ENCODE measurements at regions of chr3 and their contacts with region 1.

Region 1: DNA sequence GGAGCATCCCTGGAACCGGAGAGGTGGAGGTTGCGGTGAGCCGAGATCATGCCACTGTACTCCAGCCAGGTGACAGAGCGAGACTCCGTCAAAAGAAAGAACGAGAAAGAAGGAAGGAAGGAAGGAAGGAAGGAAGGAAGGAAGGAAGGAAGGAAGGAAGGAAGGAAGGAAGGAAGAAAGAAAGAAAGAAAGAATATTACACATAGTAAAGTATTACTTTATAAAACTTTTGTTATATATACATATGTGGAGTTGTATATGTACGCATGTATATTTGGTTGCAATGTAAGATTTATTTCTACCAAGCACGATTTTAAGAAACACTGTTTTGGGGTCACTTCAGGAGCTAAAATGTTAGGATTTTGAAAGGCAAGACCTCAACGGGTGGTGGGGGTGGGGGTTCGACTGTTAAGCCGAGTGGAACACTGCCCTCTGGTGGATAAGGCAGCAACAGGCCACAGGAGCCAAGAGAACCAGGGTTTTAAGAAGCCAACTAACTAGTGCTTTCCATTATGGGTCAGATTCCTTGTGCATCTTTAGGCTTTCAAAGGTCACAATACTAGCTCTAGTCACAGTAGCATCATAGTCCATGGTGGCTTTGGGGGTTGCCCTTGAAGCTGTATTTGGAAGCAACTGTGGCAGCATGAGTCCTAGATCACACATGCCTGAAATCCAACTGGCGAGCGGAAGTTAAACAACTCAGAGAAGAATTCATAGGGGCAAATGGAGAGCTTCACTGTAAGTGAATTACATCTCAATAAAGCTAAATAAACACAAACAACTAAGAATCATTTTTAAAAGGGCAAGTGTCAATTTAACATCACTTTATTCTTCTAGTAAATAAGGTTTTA is 22.5 kb downstream of the GLB1 start:
- DNase-seq: peak; percentile 85
- ATAC-seq: peak; percentile 87
- H3K4me3 Mint-ChIP-seq: no peak overlapping the region
- H3K27ac Mint-ChIP-seq: no peak overlapping the region
- H3K4me1 Mint-ChIP-seq: peaks cover 11% of the 10 kb centered on the region
- H3K27me3 Mint-ChIP-seq: no peaks in the 10 kb centered on the region
- CTCF ChIP-seq: peak; percentile 78

Region 2: DNA sequence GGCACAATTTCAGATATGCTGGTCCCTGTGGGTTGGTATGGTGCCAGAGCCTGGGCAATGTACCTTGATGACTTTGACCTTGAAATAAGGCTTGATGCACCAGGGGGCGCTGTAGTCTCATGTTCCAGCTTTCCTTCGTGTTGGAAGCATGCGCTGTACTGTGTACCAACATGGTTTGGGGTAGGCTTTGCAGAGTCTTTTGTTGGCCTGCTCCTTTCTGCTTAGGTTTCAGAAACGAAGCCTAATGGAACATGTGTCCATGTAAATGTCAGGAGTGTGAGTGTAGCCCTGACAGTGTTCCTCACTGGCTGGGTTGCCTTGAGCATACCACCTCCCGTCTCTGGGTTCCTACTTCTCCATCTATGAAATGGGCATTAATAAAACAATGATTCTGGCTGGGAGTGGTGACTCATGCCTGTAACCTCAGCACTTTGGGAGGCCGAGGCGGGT is 126.6 kb before region 1 on chr3:
- CTCF ChIA-PET with region 1: interaction called, 183 read pairs
- POLR2A ChIA-PET with region 1: interaction called, 3 read pairs
- intact Hi-C with region 1: loop called (anchors 2 kb)
- DNase-seq: peak; percentile 99
- ATAC-seq: peak; percentile 74
- H3K4me3 Mint-ChIP-seq: no peak overlapping the region
- H3K27ac Mint-ChIP-seq: peak overlapping the region; percentile 25
- H3K4me1 Mint-ChIP-seq: peaks cover 42% of the 10 kb centered on the region
- H3K27me3 Mint-ChIP-seq: no peaks in the 10 kb centered on the region
- CTCF ChIP-seq: peak; percentile 80

Region 3: DNA sequence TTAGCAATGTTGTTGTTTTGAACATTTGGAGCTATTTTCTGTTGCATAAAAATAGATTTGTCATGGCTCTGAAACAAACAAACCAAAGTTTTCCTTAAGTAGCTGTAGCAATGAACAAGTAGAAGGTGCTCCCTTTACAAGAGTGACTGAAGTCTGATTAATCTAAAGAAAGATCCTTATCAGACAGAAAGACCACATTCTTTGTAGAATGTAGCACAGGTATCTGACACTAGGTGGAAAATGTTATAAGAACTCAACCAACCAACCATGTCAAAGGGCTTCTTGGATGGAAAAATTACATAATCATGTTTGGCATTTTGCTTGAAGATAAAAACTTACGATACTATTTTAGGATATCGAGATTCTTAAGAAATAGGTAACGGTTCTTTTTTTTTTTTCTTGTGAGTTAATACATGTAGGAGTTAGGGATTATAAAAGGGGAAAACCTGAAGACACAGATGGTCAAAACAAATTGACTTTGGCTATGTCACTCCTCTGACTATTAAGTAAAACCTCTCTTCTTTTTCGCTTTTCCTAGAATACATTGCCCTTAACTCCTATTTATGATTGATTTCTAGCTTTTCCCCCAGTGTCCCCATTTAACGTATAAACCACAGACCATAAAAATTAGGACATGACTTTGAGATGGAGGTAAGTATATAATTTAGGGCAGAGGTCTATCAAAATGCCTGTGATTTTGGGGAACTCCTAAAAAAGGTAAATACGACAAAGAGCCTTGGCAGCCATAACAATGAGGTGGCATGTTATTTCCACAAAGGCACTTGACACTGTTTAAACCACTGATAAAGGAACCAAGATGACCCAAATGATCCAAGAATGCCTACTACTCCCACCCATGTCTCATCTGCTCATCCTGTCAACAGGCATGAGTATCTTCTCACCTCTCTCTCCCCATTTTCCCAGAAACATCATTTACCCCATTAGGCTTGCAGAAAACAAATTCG is 51.0 kb before region 1 on chr3:
- CTCF ChIA-PET with region 1: interaction called, 14 read pairs
- POLR2A ChIA-PET with region 1: no interaction called
- intact Hi-C with region 1: no loop called
- DNase-seq: peak; percentile 33
- ATAC-seq: peak; percentile 86
- H3K4me3 Mint-ChIP-seq: peak overlapping the region; percentile 38
- H3K27ac Mint-ChIP-seq: peak overlapping the region; percentile 95
- H3K4me1 Mint-ChIP-seq: peaks cover 49% of the 10 kb centered on the region
- H3K27me3 Mint-ChIP-seq: no peaks in the 10 kb centered on the region
- CTCF ChIP-seq: peak; percentile 32

Region 4: DNA sequence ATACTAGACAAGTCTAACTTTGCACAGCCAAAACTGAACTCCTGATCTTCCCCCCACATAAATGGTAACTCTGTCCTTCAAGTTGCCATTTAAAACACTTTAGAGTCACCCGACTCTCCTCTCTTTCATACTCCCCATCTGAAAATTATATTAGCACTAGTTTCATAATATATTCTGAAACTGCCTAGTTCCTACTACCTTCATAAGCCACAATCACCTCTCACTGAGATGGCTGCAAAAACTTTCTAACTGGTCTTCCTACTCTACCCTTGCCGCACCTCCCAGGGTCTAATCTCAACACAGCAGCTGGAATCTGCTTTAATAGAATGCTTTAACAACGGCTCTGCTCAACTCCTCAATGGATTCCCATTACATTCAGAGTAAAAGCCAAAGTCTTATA is 32.5 kb before region 1 on chr3:
- CTCF ChIA-PET with region 1: interaction called, 11 read pairs
- POLR2A ChIA-PET with region 1: no interaction called
- intact Hi-C with region 1: no loop called
- DNase-seq: no peak
- ATAC-seq: no peak
- H3K4me3 Mint-ChIP-seq: no peak overlapping the region
- H3K27ac Mint-ChIP-seq: no peak overlapping the region
- H3K4me1 Mint-ChIP-seq: peaks cover 37% of the 10 kb centered on the region
- H3K27me3 Mint-ChIP-seq: no peaks in the 10 kb centered on the region
- CTCF ChIP-seq: no peak

Region 5: GRCh38 chr3:33063651-33064051 is 10.8 kb before region 1 on chr3:
- CTCF ChIA-PET with region 1: interaction called, 54 read pairs
- POLR2A ChIA-PET with region 1: interaction called, 3 read pairs
- intact Hi-C with region 1: no loop called
- DNase-seq: peak; percentile 92
- ATAC-seq: peak; percentile 78
- H3K4me3 Mint-ChIP-seq: peak overlapping the region; percentile 24
- H3K27ac Mint-ChIP-seq: peak overlapping the region; percentile 93
- H3K4me1 Mint-ChIP-seq: peaks cover 63% of the 10 kb centered on the region
- H3K27me3 Mint-ChIP-seq: no peaks in the 10 kb centered on the region
- CTCF ChIP-seq: no peak

Region 6: GRCh38 chr3:33096093-33096868 is 21.8 kb after region 1 on chr3:
- CTCF ChIA-PET with region 1: interaction called, 24 read pairs
- POLR2A ChIA-PET with region 1: interaction called, 4 read pairs
- intact Hi-C with region 1: no loop called
- DNase-seq: peak; percentile 64
- ATAC-seq: peak; percentile 41
- H3K4me3 Mint-ChIP-seq: peak overlapping the region; percentile 97
- H3K27ac Mint-ChIP-seq: peak overlapping the region; percentile 87
- H3K4me1 Mint-ChIP-seq: peaks cover 33% of the 10 kb centered on the region
- H3K27me3 Mint-ChIP-seq: peaks cover 1% of the 10 kb centered on the region
- CTCF ChIP-seq: no peak

Region 7: GRCh38 chr3:33124638-33125037 is 50.2 kb after region 1 on chr3:
- CTCF ChIA-PET with region 1: no interaction called
- POLR2A ChIA-PET with region 1: no interaction called
- intact Hi-C with region 1: no loop called
- DNase-seq: no peak
- ATAC-seq: peak; percentile 42
- H3K4me3 Mint-ChIP-seq: no peak overlapping the region
- H3K27ac Mint-ChIP-seq: peak overlapping the region; percentile 9
- H3K4me1 Mint-ChIP-seq: peaks cover 8% of the 10 kb centered on the region
- H3K27me3 Mint-ChIP-seq: no peaks in the 10 kb centered on the region
- CTCF ChIP-seq: no peak

Measured in activated CD8-positive, alpha-beta T cell treated with anti-CD3 and anti-CD28 coated beads for 36 hours (primary cell).